ENCODE measurements at regions of chr22 and their contacts with region 1.

Region 1: GRCh38 chr22:19178656-19179496 is at the start of gene SLC25A1:
- DNase-seq: peak; percentile 65 to 89
- H3K4me3 ChIP-seq: peak within 1 kb of the TSS; percentile 88
- H3K27ac ChIP-seq: peak within 1 kb of the TSS; percentile 36
- H3K4me1 ChIP-seq: peaks cover 29% of the 10 kb centered on the region; the same call in 1 of the 2 replicates
- H3K27me3 ChIP-seq: no peaks in the 10 kb centered on the region
- CTCF ChIP-seq: no peak
- total RNA-seq, gene SLC25A1: 79.1 and 79.9 TPM in 2 replicates

Region 2: DNA sequence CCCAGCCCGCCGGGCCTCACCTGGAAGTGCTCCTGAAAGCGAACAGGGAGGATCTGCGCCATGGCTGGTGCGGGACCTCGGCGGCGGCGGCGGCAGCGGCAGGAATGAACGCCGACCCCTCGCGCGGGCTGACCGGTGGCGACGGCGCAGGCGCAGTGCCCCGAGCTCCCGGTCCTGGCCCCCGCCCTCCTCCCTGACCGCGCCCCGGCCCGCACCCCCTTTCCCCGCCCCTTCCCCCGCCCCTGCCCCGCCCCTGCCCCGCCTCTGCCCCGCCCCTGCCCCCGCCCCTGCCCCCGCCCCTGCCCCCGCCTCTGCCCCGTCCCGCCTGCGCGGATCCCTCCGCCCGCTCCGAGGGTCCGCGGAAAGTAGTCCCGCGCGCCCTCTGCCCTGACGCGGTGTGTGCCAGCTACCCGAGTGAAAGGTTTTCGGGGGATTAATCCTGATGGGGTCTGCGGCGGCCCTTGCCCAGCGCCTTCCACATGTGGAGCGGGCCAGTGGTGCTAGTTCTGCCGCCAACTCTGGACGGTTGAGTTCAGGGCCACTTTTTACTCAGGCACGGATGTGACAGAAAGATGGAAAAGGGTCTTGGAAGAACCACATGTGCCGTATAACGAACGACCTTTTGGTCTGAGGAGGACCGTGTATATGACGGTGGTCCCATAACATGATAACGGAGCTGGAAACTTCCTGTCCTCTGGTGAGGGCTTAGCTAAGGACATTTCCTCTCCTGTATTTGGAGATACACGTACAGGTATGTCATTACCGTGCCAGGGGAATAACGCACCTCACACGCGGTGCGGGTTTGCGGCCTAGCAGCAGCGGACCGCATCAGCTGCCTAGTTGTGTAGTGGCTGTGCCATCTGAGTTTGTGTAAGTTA is 112.9 kb after region 1 on chr22 and contains the start of gene CLTCL1:
- CTCF ChIA-PET with region 1: no interaction called
- POLR2A ChIA-PET with region 1: no interaction called
- intact Hi-C with region 1: loop called (anchors 2 kb)
- DNase-seq: peak in 1 of 2 experiments; percentile 66
- H3K4me3 ChIP-seq: peak within 1 kb of the TSS; percentile 75
- H3K27ac ChIP-seq: no peak within 1 kb of the TSS
- H3K4me1 ChIP-seq: no peaks in the 10 kb centered on the region
- H3K27me3 ChIP-seq: no peaks in the 10 kb centered on the region
- CTCF ChIP-seq: no peak
- total RNA-seq, gene CLTCL1: 6.6 and 7.2 TPM in 2 replicates

Region 3: DNA sequence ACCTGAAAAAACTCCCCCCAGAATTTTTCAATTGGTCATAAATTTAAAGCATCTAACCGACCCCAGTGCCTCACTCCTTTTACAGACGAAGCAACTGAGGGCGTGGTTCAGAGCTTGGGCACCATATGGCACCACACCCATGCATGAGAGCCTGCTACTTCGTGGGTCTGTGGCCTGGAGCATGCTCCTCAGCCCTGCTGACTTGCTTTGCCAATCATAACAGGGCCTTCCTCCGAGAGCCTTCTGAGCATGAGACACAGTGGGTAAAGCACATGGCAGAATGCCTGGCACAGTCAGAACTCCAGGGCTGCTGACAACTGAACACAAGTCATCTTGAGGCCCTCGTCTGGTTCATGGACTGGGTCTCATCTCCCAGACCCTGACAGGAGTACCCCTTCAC is 219.3 kb after region 1 on chr22:
- CTCF ChIA-PET with region 1: no interaction called
- POLR2A ChIA-PET with region 1: no interaction called
- intact Hi-C with region 1: loop called (anchors 5 kb)
- DNase-seq: no peak
- H3K4me3 ChIP-seq: no peak overlapping the region
- H3K27ac ChIP-seq: no peak overlapping the region
- H3K4me1 ChIP-seq: no peaks in the 10 kb centered on the region
- H3K27me3 ChIP-seq: no peaks in the 10 kb centered on the region
- CTCF ChIP-seq: no peak

Region 4: DNA sequence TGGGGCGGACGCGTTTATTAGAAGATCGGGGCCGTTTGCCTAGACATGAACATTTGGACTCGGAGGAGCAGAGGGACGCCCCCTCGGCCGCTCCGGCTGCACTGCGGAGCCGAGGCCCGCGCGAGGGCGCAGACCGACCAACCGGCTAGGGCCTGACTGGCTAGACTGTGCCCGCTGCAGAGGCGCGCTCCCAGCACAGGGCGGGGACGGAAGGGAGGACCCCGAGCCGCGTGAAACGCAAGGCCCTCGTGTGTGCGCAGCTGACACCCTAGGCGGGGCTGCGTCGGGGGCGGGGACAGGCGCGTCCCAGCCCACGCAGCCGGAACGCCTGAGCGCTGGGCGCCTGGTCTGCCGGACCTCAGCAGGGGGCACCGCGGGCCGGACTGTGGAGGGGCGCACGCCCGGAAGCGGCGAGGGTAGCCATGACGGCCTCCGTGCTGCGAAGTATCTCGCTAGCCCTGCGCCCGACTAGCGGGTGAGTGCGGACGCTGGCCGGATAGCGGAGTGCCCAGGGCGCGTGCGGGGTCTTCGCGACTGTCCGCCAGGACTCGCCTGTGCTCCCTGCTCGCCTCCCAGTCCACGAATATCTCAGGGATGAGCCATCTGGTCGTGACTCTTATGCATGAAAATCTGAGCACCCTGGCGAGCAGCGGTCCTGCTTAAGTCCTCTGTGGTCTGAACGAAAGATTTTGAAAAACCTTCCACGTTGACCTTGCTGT is 253.4 kb after region 1 on chr22 and contains the start of gene MRPL40:
- CTCF ChIA-PET with region 1: no interaction called
- POLR2A ChIA-PET with region 1: interaction called, 3 read pairs
- intact Hi-C with region 1: loop called (anchors 2 kb)
- DNase-seq: peak; percentile 70 to 87
- H3K4me3 ChIP-seq: peak within 1 kb of the TSS; percentile 97
- H3K27ac ChIP-seq: peak within 1 kb of the TSS; percentile 63; the same call in 1 of the 2 replicates
- H3K4me1 ChIP-seq: peaks cover 8% of the 10 kb centered on the region
- H3K27me3 ChIP-seq: no peaks in the 10 kb centered on the region
- CTCF ChIP-seq: no peak
- total RNA-seq, gene MRPL40: 21.1 and 25.1 TPM in 2 replicates

Region 5: GRCh38 chr22:19479357-19480172 is 300.7 kb after region 1 on chr22 and contains the start of gene CDC45:
- CTCF ChIA-PET with region 1: no interaction called
- POLR2A ChIA-PET with region 1: no interaction called
- intact Hi-C with region 1: loop called (anchors 2 kb)
- DNase-seq: peak; percentile 89 to 91
- H3K4me3 ChIP-seq: peak within 1 kb of the TSS; percentile 75
- H3K27ac ChIP-seq: peak within 1 kb of the TSS; percentile 92
- H3K4me1 ChIP-seq: peaks cover 15% of the 10 kb centered on the region
- H3K27me3 ChIP-seq: no peaks in the 10 kb centered on the region
- CTCF ChIP-seq: no peak
- total RNA-seq, gene CDC45: 27.5 and 29.1 TPM in 2 replicates